Posterior cingulate gyrus (tissue), 11 donors: ENCODE measurements at regions of chr4 and their contacts with region 1.

Region 1: GRCh38 chr4:166165829-166166420 is 292.9 kb downstream of the TLL1 start:
- DNase-seq: peak in 2 of 10 donors; percentile 9 to 11

Region 2: DNA sequence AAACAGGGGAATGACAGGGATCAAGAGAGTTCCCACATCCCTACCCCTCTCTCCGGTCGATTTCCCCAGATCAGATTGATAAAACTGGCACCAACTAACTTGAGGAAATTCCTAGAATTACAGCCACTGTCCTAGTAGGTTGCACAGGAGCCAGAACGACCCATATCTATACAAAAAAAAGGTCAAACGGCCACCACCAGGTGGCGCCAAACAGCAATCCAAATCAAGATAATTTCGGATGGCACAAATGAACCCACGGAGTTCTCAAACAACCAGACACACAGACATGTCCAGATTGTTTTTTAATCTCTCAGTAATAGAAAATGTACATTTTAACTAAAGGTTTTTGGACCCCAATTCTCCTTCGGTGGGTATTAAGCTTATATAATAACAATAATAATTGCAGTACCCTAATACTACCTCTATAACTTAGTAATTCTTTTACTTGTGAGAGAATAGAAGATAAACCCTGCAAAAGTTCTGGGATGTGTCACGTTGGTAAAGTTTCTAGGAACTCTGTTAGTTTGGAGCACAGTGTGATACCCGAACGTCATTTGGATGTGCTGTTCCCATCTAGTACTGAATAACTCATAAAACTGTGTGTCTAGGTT is 855.7 kb after region 1 on chr4:
- intact Hi-C with region 1: loop called (anchors 10 kb)
- DNase-seq: peak; percentile 38 to 94 (median 80)

Region 3: DNA sequence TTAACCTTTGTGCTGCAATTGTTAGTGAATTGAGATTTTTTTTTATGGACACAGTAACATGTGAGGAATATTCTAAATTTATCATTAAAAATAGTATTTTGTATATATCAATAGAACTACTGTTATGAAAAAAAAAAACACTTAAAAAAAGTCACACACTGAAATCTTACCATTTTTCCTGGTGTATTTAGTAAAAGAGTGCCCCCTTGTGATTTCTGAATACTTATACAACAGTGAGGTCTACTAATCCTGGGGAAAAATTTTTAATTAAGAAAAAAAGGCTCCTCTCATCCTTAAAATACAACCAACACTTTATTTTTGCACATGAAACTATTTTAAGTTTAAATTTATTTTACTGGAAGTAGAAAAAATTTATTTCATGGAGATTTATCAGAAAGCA is 1124.8 kb after region 1 on chr4:
- intact Hi-C with region 1: loop called (anchors 5 kb)
- DNase-seq: no peak

Region 4: DNA sequence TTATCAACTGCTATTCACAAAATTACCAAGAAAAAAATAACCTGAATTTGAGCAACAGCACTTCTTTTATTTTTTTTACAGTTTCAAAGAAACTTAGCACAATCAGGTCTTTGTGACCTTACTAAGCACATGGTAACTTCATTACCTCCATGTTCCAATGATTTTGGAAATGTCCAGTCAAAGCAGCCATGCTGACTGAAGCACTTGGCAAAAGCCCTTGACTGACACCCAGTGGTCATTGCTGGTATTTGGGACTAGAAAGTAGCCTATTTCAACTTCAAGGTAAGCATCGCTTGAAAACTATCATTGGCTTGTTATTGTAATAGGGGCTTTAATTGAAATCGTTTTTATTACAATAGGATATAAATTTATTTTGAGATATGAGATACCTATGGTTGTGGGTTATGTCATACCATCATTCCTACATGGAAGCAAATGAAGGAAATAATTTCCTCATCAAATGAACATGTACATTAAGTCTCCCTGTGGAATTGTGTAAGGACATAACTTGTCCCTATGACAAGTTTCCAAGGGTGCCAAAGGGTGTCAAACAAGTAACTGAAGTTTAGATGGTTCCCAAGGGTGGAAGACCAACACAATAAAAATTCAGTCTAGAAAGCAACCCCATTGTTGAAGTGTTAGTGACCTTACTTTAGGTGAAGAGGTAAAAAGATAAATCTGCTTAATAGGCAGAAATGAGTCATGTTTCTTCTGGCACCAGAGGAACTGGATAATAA is 1911.2 kb after region 1 on chr4:
- intact Hi-C with region 1: loop called (anchors 2 kb)
- DNase-seq: peak in 9 of 10 donors; percentile 15 to 86 (median 63)

Region 5: DNA sequence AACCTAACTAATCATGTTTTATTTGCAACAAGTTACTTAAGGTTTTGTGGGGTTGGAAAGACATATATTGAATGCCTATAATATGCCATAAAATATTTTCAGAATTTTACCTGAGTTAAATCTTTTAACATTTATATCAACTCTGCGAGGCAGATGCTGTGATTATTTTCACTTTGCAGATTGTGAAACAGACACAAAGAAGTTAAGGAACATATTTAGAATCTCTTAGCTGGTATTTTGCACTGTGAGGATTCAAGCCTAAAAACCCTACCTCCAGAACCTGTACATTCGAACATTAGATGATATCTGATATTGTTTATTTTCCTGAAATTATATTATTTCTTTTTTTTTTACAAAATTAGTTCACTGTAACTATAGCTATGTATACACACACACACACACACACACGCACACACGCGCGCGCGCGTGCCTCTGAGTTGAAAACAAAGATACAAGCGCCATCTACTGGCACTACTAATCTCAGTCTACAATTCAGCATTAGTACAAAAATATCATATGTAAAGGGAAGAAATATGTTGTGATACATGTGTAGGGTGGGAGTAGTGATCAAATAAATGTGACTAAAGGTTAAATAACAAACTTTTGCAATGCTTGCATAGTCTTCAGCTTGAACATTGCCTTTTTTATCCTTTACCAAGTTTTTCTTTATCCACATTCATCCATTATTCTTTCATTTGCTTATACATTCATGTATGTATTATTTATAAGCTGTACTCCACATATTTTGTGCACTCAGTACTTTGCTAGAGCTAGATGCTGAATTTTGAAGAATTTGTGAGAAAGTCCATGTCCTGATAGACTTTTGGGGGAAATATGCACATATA is 1987.9 kb after region 1 on chr4:
- intact Hi-C with region 1: loop called (anchors 5 kb)
- DNase-seq: peak in 9 of 10 donors; percentile 32 to 93 (median 59)